ENCODE measurements at regions of chr6 and their contacts with region 1.

Region 1: GRCh38 chr6:167832497-167833395 is 6.0 kb downstream of the AFDN start:
- DNase-seq: peak; percentile 43
- ATAC-seq: no peak; the same call in 1 of the 2 replicates
- H3K4me3 ChIP-seq: peak overlapping the region; percentile 22; the same call in 1 of the 2 replicates
- H3K27ac ChIP-seq: peak overlapping the region; percentile 20; the same call in 1 of the 2 replicates
- H3K4me1 ChIP-seq: peaks cover 49% of the 10 kb centered on the region
- H3K27me3 ChIP-seq: no peaks in the 10 kb centered on the region
- CTCF ChIP-seq: no peak

Region 2: GRCh38 chr6:167898673-167899311 is 66.0 kb after region 1 on chr6:
- CTCF ChIA-PET with region 1: no interaction called
- POLR2A ChIA-PET with region 1: no interaction called
- intact Hi-C with region 1: loop called (anchors 2 kb)
- DNase-seq: peak; percentile 59
- ATAC-seq: peak; percentile 42
- H3K4me3 ChIP-seq: no peak overlapping the region
- H3K27ac ChIP-seq: no peak overlapping the region
- H3K4me1 ChIP-seq: peaks cover 2% of the 10 kb centered on the region; the same call in 1 of the 2 replicates
- H3K27me3 ChIP-seq: no peaks in the 10 kb centered on the region
- CTCF ChIP-seq: peak; percentile 74

Region 3: GRCh38 chr6:167910016-167910415 is 77.3 kb after region 1 on chr6:
- CTCF ChIA-PET with region 1: no interaction called
- POLR2A ChIA-PET with region 1: no interaction called
- intact Hi-C with region 1: no loop called
- DNase-seq: no peak
- ATAC-seq: peak; percentile 71
- H3K4me3 ChIP-seq: no peak overlapping the region
- H3K27ac ChIP-seq: no peak overlapping the region
- H3K4me1 ChIP-seq: no peaks in the 10 kb centered on the region
- H3K27me3 ChIP-seq: no peaks in the 10 kb centered on the region
- CTCF ChIP-seq: no peak